PC-9 (cell line): ENCODE measurements at regions of chr4 and their contacts with region 1.

Region 1: DNA sequence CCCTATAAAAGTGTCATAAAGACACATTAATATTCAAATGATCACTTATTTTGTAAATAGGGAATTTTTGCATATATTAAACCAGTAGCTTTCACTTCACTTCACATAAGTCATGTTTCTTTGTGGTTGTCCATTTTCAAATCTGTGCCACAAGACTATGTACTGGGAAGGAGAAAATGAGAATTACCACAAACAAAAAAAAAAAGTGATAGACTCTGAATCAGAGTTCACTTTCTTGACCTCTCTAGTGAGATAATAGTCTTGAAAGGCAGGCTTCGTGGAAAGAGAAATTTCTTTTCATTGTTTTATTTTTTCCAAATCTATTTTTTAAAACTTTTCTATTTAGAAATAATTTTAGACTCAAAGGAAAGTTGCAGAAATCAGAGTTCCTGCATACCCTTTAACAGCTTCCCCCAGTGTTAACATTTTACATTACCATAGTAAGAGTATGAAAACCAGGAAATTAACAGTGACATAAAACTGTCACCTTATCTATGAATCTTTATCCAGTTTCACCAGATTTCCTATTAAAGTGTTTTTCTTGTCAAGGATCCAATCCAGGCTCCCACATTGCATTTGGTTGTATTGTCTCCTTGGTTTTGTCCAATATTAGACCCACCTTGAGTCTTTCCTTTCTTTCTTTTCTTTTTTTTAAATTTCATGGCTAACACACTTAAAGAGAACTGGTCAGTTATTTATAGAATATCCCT is 215.4 kb upstream of the PGRMC2 start:
- DNase-seq: no peak
- H3K4me3 ChIP-seq: no peak overlapping the region
- H3K27ac ChIP-seq: no peak overlapping the region
- H3K4me1 ChIP-seq: no peaks in the 10 kb centered on the region
- H3K27me3 ChIP-seq: no peaks in the 10 kb centered on the region
- CTCF ChIP-seq: no peak

Region 2: GRCh38 chr4:128544272-128544671 is 41.3 kb after region 1 on chr4:
- CTCF ChIA-PET with region 1: no interaction called
- POLR2A ChIA-PET with region 1: no interaction called
- intact Hi-C with region 1: loop called (anchors 1 kb)
- DNase-seq: no peak
- H3K4me3 ChIP-seq: no peak overlapping the region
- H3K27ac ChIP-seq: no peak overlapping the region
- H3K4me1 ChIP-seq: no peaks in the 10 kb centered on the region
- H3K27me3 ChIP-seq: no peaks in the 10 kb centered on the region
- CTCF ChIP-seq: no peak